ENCODE measurements at regions of chr12 and their contacts with region 1.

Region 1: DNA sequence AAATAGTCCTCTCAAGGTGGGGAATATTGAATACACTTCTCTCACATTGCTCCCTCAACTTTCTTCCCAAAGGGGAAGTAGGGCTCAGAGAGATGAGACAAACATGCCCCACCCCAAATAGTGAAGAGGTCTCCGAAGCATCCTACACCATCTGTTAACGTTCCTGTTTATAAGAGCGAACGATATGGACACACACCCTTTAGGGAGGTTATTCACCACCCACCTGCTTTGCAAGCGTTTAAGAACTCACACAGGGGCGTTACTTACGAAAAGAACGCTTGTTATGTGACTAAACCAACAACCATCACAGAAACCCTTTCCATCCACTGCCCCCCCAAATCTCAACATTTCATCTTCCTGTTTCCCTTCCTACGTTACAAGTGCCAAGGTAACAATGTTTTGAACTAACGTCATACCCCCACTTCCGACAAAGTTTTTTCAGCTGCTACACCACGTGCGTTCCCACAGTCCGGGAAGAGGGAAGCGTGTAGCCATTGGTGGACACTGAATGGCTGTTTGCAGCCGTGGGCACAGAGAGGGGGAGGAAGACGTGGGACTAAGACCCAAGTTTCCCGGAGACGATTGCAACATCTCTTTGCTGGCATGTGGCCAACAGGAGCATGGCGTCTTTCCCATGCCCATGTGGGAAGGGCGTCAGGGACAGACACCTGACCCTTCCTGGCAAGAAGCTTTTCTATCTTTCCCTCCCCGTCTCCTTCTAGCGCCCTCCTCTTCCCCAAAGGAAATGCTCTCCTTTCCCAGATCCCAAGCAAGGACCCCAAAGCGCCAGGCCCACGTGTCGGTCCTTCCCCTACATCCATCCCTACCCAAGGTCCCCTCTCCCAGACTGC is 1.2 kb downstream of the YBX3 start:
- DNase-seq: peak; percentile 53
- H3K4me3 Mint-ChIP-seq: peak overlapping the region; percentile 96
- H3K27ac Mint-ChIP-seq: peak overlapping the region; percentile 96
- H3K4me1 Mint-ChIP-seq: peaks cover 60% of the 10 kb centered on the region
- H3K27me3 Mint-ChIP-seq: peaks cover 34% of the 10 kb centered on the region

Region 2: DNA sequence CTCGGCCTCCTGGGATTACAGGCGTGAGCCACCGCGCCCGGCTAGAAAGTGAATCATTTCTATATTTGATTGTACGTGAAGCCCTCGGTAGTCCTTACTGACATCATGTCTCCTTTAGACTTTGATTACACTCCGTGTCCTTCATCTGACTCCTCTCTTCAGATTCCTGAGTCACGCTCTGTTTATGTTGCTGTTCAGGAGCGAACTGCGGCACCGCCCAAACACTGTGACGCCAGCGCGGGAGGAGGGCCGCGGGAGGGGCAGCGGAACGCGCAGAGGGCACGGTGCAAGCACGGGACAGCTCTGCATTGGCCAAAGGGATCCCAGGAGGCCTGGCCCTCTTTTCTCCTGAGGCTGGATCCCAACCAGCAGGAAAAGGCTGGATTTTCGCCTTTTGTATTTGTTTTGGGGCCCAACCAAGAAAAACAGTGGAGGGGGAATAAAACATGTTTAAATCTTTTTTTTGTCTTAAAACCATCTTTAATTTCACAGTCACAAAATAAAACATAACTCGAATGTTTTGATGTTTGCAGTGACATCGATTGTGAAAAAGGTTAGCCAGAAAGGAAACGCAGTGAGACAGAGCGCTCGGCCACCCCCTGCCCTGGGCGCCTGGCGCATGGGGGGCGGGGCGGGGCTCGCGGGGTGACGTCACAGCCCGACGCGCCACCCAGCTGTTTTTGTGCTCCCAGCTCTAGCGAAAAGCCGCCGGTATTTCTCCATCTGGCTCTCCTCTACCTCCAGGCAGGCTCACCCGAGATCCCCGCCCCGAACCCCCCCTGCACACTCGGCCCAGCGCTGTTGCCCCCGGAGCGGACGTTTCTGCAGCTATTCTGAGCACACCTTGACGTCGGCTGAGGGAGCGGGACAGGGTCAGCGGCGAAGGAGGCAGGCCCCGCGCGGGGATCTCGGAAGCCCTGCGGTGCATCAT is 509.4 kb before region 1 on chr12 and contains the start of gene GABARAPL1:
- intact Hi-C with region 1: loop called (anchors 1 kb)
- DNase-seq: peak; percentile 76
- H3K4me3 Mint-ChIP-seq: peak within 1 kb of the TSS; percentile 84
- H3K27ac Mint-ChIP-seq: peak within 1 kb of the TSS; percentile 93
- H3K4me1 Mint-ChIP-seq: peaks cover 32% of the 10 kb centered on the region
- H3K27me3 Mint-ChIP-seq: peaks cover 23% of the 10 kb centered on the region
- total RNA-seq, gene GABARAPL1: 5.0 and 6.6 TPM in 2 replicates

Region 3: DNA sequence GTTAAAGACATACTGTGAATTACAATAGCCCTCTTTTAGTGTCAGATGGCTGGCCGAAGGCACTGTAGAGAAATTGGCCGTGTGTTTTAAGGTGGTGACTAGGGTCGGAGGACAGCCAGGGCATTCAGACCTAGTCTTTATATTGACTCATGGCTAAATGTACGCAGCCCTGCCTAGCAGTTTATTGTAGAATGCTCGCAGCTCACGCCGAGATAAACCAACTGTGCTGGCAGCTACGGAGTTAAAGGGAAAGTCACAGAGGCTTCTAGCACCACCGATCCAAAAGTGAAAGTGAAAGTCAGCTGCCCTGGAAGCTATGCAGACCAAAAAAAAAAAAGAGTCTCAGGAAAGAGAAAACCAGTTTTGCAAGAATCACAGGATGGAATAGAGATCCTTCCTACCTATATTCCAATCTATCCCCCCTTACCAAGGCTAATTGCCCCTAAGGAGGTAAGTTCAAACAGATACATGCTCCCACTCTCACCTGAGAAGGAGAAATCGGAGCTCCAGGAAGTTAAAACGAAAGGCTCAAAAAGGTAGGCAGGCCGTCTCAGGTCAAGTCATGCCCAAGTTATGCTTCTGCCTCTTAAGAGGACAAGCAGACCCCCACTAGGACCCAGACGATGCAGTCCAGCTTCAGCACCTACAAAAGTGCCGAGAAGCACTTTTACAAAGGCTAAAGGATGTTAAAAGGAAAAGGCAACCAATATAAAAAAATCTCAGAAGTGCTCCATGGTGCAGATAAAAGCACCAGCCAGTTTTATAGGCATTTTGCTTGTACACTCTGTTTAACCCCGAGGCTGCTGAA is 356.9 kb before region 1 on chr12:
- intact Hi-C with region 1: no loop called
- DNase-seq: peak; percentile 52
- H3K4me3 Mint-ChIP-seq: no peak overlapping the region
- H3K27ac Mint-ChIP-seq: no peak overlapping the region
- H3K4me1 Mint-ChIP-seq: no peaks in the 10 kb centered on the region
- H3K27me3 Mint-ChIP-seq: peaks cover 39% of the 10 kb centered on the region

Region 4: DNA sequence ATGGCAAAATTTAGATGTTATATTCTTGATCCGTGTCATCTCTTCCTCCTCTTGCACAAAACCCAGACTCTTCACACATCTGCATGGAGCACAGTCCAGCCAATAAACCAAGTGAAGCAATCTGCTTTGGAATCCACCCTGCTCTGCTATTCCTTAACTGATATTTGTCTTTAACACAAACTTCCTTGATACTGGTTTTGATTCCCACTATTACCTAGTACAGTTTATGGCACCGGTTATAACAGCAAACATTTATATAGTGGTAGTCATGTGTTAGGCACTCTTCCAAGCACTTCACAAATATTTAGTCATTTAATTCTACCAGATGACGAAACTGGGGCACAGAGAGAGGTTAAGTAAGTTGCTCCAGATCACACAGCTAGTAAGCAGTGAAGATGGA is 60.5 kb before region 1 on chr12:
- intact Hi-C with region 1: no loop called
- DNase-seq: no peak
- H3K4me3 Mint-ChIP-seq: no peak overlapping the region
- H3K27ac Mint-ChIP-seq: no peak overlapping the region
- H3K4me1 Mint-ChIP-seq: no peaks in the 10 kb centered on the region
- H3K27me3 Mint-ChIP-seq: peaks cover 34% of the 10 kb centered on the region

Region 5: GRCh38 chr12:10701131-10701681 is 20.7 kb before region 1 on chr12:
- intact Hi-C with region 1: loop called (anchors 1 kb)
- DNase-seq: no peak
- H3K4me3 Mint-ChIP-seq: peak overlapping the region; percentile 4
- H3K27ac Mint-ChIP-seq: peak overlapping the region; percentile 15
- H3K4me1 Mint-ChIP-seq: peaks cover 17% of the 10 kb centered on the region
- H3K27me3 Mint-ChIP-seq: no peaks in the 10 kb centered on the region

Region 6: DNA sequence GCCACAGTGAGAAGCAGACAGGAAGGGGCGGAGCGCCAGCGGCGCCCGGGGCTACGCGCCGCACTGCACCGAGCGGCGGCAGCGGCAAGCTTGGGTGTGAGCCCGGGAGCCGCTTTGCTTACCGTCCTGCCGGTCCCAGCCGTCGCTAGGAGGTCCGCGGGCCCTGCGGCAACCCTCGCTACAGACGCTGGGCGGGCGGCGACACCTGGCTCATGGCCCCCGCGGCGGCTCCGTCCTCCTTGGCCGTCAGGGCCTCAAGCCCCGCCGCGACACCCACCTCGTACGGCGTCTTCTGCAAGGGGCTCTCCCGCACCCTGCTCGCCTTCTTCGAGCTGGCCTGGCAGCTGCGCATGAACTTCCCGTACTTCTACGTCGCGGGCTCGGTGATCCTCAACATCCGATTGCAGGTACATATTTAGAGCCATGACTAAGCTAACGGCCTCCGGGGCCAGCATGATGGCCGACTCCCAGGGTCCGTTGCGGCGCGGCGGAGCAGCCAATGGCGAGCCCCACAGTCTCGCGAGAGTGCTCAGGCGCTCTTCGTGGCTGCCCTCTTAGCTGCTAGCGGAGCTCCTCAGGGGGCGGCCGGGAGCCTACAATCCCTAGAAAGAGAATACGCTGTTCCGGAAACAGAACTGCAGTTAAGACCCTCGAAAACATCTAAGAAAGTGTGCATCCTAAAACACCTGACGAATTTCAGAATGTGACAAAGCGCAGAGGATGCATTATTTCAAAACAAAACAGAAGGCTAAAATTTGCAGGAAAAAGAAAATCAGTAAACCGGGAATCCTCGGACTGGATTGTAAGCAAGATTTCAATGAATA is 449.5 kb after region 1 on chr12 and contains the start of gene SMIM10L1:
- intact Hi-C with region 1: loop called (anchors 1 kb)
- DNase-seq: peak; percentile 86
- H3K4me3 Mint-ChIP-seq: peak within 1 kb of the TSS; percentile 99
- H3K27ac Mint-ChIP-seq: peak within 1 kb of the TSS; percentile 100
- H3K4me1 Mint-ChIP-seq: peaks cover 58% of the 10 kb centered on the region
- H3K27me3 Mint-ChIP-seq: no peaks in the 10 kb centered on the region
- total RNA-seq, gene SMIM10L1: 10.4 and 11.3 TPM in 2 replicates